Vagina (tissue), 2 donors: ENCODE measurements at regions of chr9 and their contacts with region 1.

Region 1: DNA sequence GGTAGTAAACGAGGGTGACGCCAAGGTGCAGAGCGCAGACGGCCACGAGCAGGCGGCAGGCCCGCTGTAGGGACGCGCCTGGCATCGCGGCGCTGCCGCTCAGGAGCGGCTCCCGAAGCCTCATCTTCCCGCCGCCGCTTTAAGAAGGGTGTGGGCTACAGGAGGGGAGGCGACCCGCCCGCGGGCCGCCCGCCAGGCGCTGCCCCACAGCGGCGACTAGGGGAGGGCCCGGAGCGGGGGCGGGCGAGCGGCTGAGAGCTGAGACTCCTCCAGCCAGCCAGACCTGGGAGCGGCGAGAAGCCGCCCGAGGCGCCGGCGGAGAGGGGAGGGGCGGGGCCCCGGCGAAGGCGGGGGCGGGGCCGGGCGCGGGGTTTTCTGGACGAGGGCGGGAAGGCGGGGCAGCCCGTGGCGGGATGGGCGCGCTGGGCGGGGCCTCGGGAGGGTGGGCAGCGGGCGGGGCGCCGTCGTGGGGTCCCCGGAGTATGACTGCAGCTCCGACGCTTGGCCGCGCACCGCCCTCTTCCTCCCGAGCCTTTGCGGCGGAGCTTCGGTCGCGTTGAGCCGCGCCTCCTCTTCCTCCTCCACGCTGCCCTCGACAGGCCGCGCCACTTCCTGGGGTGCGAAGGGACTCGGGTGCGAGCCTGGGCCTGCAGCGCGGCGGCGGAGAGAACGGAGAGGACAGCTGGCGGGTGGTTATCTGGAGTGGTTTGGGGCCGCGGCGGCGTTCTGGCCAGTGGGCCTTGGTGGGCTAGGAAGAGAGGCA is at the start of gene B4GALT1:
- DNase-seq: peak; percentile 96
- H3K4me3 ChIP-seq: peak within 1 kb of the TSS; percentile 79 to 91
- H3K27ac ChIP-seq: peak within 1 kb of the TSS; percentile 98
- H3K4me1 ChIP-seq: peaks cover 47% of the 10 kb centered on the region
- H3K27me3 ChIP-seq: no peaks in the 10 kb centered on the region
- CTCF ChIP-seq: no peak
- POLR2A ChIP-seq: peak in 1 of 2 donors; percentile 91
- total RNA-seq, gene B4GALT1: 85.2 TPM

Region 2: GRCh38 chr9:33029106-33029788 is 138.0 kb before region 1 on chr9:
- intact Hi-C with region 1: loop called (anchors 2 kb)
- DNase-seq: no peak
- H3K4me3 ChIP-seq: no peak overlapping the region
- H3K27ac ChIP-seq: peak overlapping the region; percentile 20
- H3K4me1 ChIP-seq: peaks cover 70% of the 10 kb centered on the region
- H3K27me3 ChIP-seq: no peaks in the 10 kb centered on the region
- CTCF ChIP-seq: no peak
- POLR2A ChIP-seq: no peak

Region 3: GRCh38 chr9:33197279-33198152 is 30.3 kb after region 1 on chr9:
- intact Hi-C with region 1: loop called (anchors 1 kb)
- DNase-seq: no peak
- H3K4me3 ChIP-seq: no peak overlapping the region
- H3K27ac ChIP-seq: peak overlapping the region; percentile 31
- H3K4me1 ChIP-seq: peaks cover 49% of the 10 kb centered on the region
- H3K27me3 ChIP-seq: no peaks in the 10 kb centered on the region
- CTCF ChIP-seq: peak in 1 of 3 experiments; percentile 9
- POLR2A ChIP-seq: no peak

Region 4: DNA sequence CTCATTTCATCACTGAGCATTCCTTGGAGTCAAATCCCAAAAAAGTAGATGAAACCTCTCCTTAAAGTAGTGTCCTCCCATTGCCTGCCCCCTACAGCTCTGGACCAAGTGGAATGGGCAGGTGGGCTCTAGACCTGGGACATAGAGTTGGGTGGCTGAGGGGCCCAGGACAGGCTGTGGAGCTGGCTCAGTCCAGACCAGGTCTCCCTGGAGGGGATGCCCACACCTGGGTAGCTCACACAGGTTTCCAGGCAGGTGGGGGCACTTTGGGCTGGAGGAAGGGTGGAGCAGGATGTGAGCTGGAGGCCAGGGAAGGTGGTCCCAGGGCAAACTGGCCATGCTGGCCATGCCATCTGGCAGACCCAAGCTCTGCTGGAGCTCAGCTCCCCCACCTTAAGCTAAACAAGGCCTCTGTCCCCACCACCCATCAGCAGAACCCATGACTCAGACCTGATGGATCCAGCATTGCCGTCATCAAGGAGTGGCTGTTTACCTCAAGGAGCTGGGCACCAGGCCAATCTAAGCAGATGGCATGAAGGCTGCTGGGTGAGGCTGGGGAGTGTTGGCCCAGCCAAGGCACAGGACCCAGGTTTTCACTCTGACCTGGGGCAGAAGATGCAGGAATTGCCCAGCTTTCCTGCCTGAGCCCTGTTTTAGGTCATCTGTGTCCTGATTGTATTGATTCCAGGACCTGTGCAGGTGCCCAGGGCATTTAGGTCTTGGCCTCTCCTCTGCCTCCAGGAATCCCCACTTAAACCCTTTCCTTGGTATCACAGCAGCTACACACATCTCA is 66.7 kb after region 1 on chr9:
- intact Hi-C with region 1: no loop called
- DNase-seq: no peak
- H3K4me3 ChIP-seq: no peak overlapping the region
- H3K27ac ChIP-seq: peak overlapping the region; percentile 63
- H3K4me1 ChIP-seq: no peaks in the 10 kb centered on the region
- H3K27me3 ChIP-seq: no peaks in the 10 kb centered on the region
- CTCF ChIP-seq: no peak
- POLR2A ChIP-seq: no peak

Region 5: DNA sequence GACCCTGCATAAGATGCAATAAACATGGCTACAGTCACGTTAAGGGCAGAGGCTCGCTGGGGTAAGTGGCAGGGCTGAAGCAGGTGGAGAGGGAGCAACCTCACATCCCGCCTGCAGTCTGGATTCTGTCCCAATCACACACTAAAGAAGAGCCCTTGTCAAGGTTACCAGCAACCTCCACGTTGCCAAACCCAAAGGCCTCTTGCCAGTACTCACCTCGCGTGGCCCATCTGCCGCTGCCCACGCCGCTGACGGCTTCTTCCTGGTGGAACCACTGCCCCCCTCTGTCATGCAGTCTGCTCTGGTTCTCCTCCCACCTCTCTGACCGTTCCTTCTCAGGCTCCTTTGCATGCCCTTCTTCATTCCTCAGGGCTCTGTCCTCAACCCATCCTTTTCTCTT is 226.4 kb after region 1 on chr9:
- intact Hi-C with region 1: no loop called
- DNase-seq: no peak
- H3K4me3 ChIP-seq: no peak overlapping the region
- H3K27ac ChIP-seq: no peak overlapping the region
- H3K4me1 ChIP-seq: peaks cover 11% of the 10 kb centered on the region
- H3K27me3 ChIP-seq: no peaks in the 10 kb centered on the region
- CTCF ChIP-seq: no peak
- POLR2A ChIP-seq: no peak

Region 6: DNA sequence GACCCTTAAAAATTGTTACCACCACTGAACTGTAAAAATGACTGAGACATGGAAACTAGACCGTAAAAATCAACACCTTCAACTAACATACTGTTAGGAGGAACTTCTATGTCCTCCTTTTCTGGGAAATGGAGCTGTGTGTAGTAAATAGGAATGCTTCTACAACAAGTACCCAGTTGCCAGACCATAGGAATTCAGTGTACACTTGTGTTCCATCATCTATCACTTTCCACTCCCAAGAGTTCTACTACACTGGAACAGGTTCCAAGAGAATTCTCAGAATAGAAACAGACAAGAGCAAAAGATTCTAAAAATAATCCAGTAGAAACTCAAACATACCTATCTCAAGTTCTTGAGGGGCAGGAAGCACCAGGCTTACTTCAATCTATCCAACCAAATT is 857.8 kb after region 1 on chr9:
- intact Hi-C with region 1: no loop called
- DNase-seq: no peak
- H3K4me3 ChIP-seq: no peak overlapping the region
- H3K27ac ChIP-seq: no peak overlapping the region
- H3K4me1 ChIP-seq: no peaks in the 10 kb centered on the region
- H3K27me3 ChIP-seq: no peaks in the 10 kb centered on the region
- CTCF ChIP-seq: no peak
- POLR2A ChIP-seq: no peak